ENCODE measurements at regions of chr19 and their contacts with region 1.

Region 1: DNA sequence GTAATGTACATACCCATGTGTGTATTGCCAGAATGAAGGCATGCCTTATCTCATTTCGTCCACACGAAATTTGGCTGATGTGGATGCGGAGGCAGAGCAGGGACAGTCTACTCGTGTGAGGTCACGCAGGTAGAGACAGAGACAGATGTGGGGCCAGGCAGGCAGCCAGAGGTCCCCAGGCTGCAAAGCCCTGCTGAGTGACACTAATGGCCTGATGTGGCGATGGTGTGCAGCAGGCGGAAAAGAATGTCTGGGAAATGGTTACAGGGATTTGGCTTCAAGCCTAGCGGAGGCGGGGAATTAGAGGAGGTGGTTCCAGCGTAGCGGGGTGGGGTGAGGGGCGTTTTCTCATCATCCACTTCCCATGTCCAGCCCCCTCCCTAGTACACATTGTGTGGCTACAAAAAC is 4.2 kb upstream of the IZUMO2 start:
- DNase-seq: no peak
- ATAC-seq: no peak
- H3K4me3 ChIP-seq: no peak overlapping the region
- H3K27ac ChIP-seq: no peak overlapping the region
- H3K4me1 ChIP-seq: no peaks in the 10 kb centered on the region
- H3K27me3 ChIP-seq: no peaks in the 10 kb centered on the region
- CTCF ChIP-seq: no peak
- POLR2A ChIP-seq: no peak

Region 2: GRCh38 chr19:49954079-49954829 is 213.1 kb before region 1 on chr19:
- intact Hi-C with region 1: no loop called
- DNase-seq: no peak
- ATAC-seq: peak; percentile 62 to 75 (median 69)
- H3K4me3 ChIP-seq: no peak overlapping the region
- H3K27ac ChIP-seq: no peak overlapping the region
- H3K4me1 ChIP-seq: peaks cover 0 to 10% (median 0%) of the 10 kb centered on the region in 4 donors
- H3K27me3 ChIP-seq: no peaks in the 10 kb centered on the region
- CTCF ChIP-seq: no peak
- POLR2A ChIP-seq: no peak

Region 3: DNA sequence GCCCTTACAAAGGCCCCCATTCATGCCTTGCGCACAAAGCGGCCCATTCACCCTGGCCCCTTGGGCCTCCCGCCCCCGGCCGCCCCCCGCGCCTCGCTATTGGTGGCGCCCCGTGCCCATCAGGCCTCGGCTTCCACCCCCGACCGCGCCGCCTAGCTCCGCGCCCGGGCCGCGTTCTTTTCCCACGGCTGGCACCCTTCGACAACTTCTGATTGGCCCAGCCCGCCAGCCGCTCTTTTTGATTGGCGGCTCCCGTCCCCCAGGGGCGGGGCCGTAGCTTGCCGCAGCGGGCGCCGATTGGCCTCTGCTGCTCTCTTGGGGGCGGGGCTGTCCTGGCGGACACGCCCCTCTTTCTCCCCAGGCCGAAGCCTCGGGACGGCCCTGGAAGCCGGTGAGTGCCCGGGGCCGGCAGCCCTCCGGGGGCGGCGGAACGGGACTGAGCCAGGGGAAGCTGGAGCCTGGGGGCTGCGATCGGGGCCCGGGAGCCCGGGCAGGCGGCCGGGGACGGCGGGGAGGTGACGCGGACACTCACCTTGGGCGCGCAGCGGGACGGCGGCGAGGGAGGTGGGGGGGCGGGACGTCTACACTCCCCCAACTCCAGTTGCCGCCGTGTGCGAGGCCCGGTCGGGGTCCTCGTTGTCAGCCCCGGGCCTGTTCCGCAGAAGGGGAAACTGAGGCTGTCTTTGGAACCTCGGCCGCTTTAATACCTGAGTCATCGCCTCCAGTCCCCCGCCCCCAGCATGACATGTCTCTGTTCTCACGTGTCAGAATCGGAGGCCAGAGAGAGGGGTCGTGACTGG is 36.2 kb after region 1 on chr19 and contains the start of gene MYH14:
- intact Hi-C with region 1: no loop called
- DNase-seq: peak; percentile 93 to 96 (median 95)
- ATAC-seq: peak; percentile 83 to 90 (median 87)
- H3K4me3 ChIP-seq: peak within 1 kb of the TSS; percentile 61 to 76 (median 67)
- H3K27ac ChIP-seq: peak within 1 kb of the TSS; percentile 76 to 85 (median 80)
- H3K4me1 ChIP-seq: peaks cover 0 to 19% (median 7%) of the 10 kb centered on the region in 4 donors
- H3K27me3 ChIP-seq: no peaks in the 10 kb centered on the region
- CTCF ChIP-seq: peak in 2 of 4 donors; percentile 13 to 27
- POLR2A ChIP-seq: peak; percentile 83
- total RNA-seq, gene MYH14: 49.1 to 89.0 (median 65.8) TPM

Region 4: GRCh38 chr19:50252111-50252886 is 85.0 kb after region 1 on chr19:
- intact Hi-C with region 1: loop called (anchors 5 to 10 kb)
- DNase-seq: no peak
- ATAC-seq: peak in 1 of 4 donors; percentile 29
- H3K4me3 ChIP-seq: no peak overlapping the region
- H3K27ac ChIP-seq: no peak overlapping the region
- H3K4me1 ChIP-seq: no peaks in the 10 kb centered on the region
- H3K27me3 ChIP-seq: no peaks in the 10 kb centered on the region
- CTCF ChIP-seq: peak; percentile 19 to 52 (median 43)
- POLR2A ChIP-seq: no peak

Region 5: GRCh38 chr19:50258918-50259372 is 91.6 kb after region 1 on chr19:
- intact Hi-C with region 1: loop called (anchors 5 to 10 kb)
- DNase-seq: no peak
- ATAC-seq: peak; percentile 23 to 52 (median 40)
- H3K4me3 ChIP-seq: no peak overlapping the region
- H3K27ac ChIP-seq: no peak overlapping the region
- H3K4me1 ChIP-seq: no peaks in the 10 kb centered on the region
- H3K27me3 ChIP-seq: no peaks in the 10 kb centered on the region
- CTCF ChIP-seq: peak; percentile 49 to 77 (median 62)
- POLR2A ChIP-seq: no peak

Measured in right lobe of liver (tissue), 6 donors.